PC-9 (cell line): ENCODE measurements at regions of chr12 and their contacts with region 1.

Region 1: DNA sequence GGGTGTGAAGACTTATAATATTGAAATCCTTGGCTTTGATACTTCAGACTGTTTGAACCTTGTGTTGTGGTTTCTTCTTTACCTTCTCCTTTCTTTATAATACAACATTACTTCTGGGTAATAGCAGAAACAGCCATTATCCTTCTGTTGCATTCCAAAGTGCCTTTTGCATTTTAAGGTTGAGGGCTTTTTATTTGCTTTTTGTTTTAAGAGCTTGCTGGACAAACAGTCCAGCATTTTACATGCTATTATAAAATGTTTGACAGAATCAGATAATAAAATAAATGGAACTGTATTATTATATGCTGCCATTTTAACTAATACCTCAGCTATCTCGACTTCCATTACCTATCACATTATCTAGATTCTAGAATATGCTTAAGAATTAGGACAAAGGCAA is 14.0 kb downstream of the RNF34 start:
- DNase-seq: no peak
- H3K4me3 ChIP-seq: no peak overlapping the region
- H3K27ac ChIP-seq: no peak overlapping the region
- H3K4me1 ChIP-seq: no peaks in the 10 kb centered on the region
- H3K27me3 ChIP-seq: no peaks in the 10 kb centered on the region
- CTCF ChIP-seq: no peak

Region 2: GRCh38 chr12:120939523-120939922 is 474.4 kb before region 1 on chr12:
- CTCF ChIA-PET with region 1: no interaction called
- POLR2A ChIA-PET with region 1: no interaction called
- intact Hi-C with region 1: no loop called
- DNase-seq: no peak
- H3K4me3 ChIP-seq: no peak overlapping the region
- H3K27ac ChIP-seq: no peak overlapping the region
- H3K4me1 ChIP-seq: no peaks in the 10 kb centered on the region
- H3K27me3 ChIP-seq: no peaks in the 10 kb centered on the region
- CTCF ChIP-seq: no peak

Region 3: DNA sequence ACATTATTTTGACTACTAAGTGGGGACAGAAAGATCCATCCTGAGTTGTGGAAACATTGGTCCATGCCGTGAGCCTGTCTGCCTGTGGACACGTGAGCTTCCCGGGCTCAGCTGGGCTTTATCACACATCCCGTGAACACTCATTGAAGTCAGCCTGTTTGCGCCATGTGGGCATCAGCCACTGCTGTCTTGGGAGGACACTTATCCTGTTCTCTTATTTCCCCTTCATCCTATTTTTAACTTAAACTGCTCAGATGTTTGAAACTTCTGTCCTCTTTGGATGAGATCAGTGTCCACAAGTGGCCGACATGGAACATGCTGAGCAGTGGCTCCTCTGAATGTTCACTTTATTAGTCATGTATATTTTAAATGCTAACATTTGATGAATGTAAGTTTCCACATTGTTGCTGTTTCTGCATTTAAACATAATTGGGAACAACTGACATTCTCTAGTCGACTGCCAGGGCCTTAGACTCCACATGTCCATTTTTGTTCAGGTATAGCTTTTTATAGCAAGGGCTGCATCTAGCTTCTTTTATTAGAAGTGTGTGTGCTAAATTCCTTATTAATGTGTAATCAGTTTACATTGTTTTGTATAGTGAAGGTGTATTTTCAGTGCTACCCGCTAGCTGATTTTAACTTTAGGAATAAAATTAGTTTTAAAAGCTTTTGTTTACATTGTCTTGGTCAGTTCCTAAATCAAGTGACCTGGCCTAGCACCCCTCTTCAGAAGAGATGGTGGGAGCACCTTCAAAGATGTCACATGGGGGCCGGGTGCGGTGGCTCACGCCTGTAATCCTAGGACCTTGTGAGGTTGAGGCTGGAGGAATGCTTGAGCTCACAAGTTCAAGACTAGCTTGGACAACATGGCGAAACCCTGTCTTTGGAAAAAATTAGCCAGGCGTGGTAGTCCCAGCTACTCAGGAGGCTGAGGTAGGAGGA is 10.0 kb after region 1 on chr12:
- CTCF ChIA-PET with region 1: interaction called, 14 read pairs
- POLR2A ChIA-PET with region 1: no interaction called
- intact Hi-C with region 1: no loop called
- DNase-seq: no peak
- H3K4me3 ChIP-seq: no peak overlapping the region
- H3K27ac ChIP-seq: no peak overlapping the region
- H3K4me1 ChIP-seq: no peaks in the 10 kb centered on the region
- H3K27me3 ChIP-seq: no peaks in the 10 kb centered on the region
- CTCF ChIP-seq: no peak

Region 4: GRCh38 chr12:121436706-121437105 is 22.8 kb after region 1 on chr12:
- CTCF ChIA-PET with region 1: no interaction called
- POLR2A ChIA-PET with region 1: no interaction called
- intact Hi-C with region 1: no loop called
- DNase-seq: no peak
- H3K4me3 ChIP-seq: no peak overlapping the region
- H3K27ac ChIP-seq: no peak overlapping the region
- H3K4me1 ChIP-seq: no peaks in the 10 kb centered on the region
- H3K27me3 ChIP-seq: no peaks in the 10 kb centered on the region
- CTCF ChIP-seq: no peak